Activated B cell treated with CpG ODN at 0.5 μM for 24 hours (primary cell): ENCODE measurements at regions of chr10 and their contacts with region 1.

Region 1: DNA sequence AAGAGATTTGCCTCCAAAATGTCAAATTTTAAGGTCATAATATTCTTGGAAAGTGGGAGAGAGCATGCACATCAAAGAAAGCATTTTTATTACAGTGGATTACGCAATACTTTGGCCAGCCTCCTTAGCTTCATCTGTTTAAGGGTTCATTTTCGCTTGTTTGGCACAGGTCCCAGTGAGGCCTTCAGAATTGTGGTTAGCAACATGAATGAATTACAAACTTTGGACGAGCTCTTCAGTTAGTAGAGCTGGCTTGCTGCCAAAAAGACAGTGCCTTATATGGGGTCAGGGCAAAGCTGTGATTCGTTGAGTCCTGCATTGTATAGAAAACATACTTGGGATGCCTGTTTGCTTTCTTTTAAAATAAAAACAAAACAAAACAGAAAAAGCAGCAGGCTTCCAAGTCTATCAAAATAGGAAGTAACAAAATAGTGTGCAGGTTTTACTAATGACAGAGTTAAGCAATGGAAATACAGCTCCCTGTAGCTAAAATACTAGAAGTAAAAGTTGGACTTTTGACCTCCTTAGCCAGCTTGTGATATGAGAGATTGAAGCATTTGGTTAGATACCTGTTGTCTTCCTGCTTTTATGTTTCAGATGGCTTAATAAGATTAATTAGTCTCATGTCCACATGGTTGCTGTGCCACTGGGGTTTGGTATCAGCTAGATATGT is 190.8 kb downstream of the MLLT10 start:
- DNase-seq: no peak
- ATAC-seq: no peak
- H3K4me3 Mint-ChIP-seq: no peak overlapping the region
- H3K27ac Mint-ChIP-seq: no peak overlapping the region
- H3K4me1 Mint-ChIP-seq: peaks cover 4% of the 10 kb centered on the region
- H3K27me3 Mint-ChIP-seq: no peaks in the 10 kb centered on the region
- CTCF ChIP-seq: no peak

Region 2: GRCh38 chr10:21587391-21587790 is 137.4 kb before region 1 on chr10:
- CTCF ChIA-PET with region 1: no interaction called
- POLR2A ChIA-PET with region 1: interaction called, 11 read pairs
- intact Hi-C with region 1: no loop called
- DNase-seq: no peak
- ATAC-seq: no peak
- H3K4me3 Mint-ChIP-seq: no peak overlapping the region
- H3K27ac Mint-ChIP-seq: no peak overlapping the region
- H3K4me1 Mint-ChIP-seq: no peaks in the 10 kb centered on the region
- H3K27me3 Mint-ChIP-seq: no peaks in the 10 kb centered on the region
- CTCF ChIP-seq: no peak

Region 3: DNA sequence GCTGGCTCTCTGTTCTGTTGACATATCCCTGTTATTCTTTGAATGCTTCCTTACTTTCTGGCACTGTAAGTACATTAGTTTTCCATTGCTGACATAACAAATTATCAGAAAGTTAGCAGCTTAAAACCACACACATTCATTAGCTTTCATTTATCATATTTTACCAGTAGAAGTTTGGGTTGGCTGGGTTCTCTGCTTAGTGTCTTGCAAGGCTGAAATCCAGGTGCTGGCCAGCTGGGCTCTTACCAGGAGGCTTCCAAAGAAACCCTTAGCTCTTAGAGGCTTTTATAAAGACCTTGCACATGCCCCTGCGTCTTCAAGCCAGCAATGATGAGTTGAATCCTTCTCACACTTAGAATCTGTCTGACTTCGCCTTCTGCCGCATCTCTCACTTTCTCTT is 30.2 kb before region 1 on chr10:
- CTCF ChIA-PET with region 1: no interaction called
- POLR2A ChIA-PET with region 1: no interaction called
- intact Hi-C with region 1: loop called (anchors 5 kb)
- DNase-seq: no peak
- ATAC-seq: no peak
- H3K4me3 Mint-ChIP-seq: no peak overlapping the region
- H3K27ac Mint-ChIP-seq: no peak overlapping the region
- H3K4me1 Mint-ChIP-seq: no peaks in the 10 kb centered on the region
- H3K27me3 Mint-ChIP-seq: no peaks in the 10 kb centered on the region
- CTCF ChIP-seq: no peak

Region 4: DNA sequence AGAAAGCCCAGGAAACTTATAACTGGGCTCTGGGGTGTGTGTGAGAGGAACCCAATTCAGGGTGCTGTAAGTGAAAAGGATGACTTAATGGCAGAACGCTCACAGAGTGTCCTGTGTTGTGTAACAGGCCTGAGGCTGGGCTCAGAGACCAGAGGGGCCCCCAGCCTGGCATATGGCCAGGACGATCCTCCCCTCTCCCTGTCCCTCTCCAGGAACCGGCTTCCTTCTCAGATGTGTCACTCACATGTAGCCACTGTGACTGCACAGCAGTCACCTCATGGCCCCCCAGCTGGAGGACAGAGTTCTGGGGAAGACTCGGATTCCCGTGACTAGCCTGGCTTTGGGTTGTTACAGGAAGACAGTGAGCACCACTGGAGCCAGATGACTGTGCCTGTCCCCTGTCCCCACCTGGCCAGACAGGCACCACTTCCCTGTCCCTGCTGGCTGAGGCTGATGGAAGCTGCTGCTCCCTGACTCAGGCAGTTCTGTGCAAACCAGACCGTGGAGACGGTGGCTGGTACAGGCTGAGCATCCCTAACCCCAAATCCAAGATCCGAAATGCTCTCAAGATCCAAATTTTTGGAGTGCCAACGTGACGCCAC is 29.7 kb after region 1 on chr10:
- CTCF ChIA-PET with region 1: no interaction called
- POLR2A ChIA-PET with region 1: no interaction called
- intact Hi-C with region 1: no loop called
- DNase-seq: no peak
- ATAC-seq: no peak
- H3K4me3 Mint-ChIP-seq: no peak overlapping the region
- H3K27ac Mint-ChIP-seq: no peak overlapping the region
- H3K4me1 Mint-ChIP-seq: no peaks in the 10 kb centered on the region
- H3K27me3 Mint-ChIP-seq: no peaks in the 10 kb centered on the region
- CTCF ChIP-seq: no peak

Region 5: DNA sequence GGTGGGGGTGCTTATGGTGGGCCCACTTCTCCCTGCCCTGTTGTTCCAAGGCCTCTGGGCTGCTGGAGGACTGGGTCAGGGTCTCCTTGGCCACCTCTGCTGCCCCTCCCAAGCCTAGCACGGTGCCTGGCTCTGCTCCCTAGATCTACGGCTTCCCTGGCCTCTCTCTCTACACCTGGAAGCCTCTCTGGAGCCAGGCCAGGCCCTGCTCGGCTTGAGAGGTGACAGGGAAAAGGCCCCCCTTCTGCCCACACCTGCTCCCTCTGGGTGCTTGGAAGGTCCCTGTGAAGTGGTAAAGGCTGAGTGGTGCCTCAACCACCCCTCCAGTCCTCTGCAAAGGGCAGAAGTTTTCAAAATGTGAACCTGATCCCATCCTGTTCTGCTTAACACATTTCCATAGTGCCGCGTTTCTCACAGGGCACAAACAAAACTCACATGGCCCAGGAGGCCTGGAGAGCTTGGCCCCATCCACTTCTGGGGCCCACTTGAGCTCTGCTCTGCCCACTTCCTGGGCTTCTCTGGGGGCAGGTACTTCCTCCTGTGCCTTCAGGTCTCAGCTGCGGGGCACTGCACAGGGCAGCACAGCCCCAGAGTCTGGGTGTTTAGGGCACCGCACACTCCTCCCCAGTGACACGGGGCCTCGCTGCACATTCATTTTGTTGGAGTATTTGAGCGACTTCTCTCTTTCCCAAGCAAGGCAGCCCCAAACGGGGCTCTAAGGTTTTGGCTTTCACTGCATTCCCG is 819.7 kb after region 1 on chr10:
- CTCF ChIA-PET with region 1: no interaction called
- POLR2A ChIA-PET with region 1: no interaction called
- intact Hi-C with region 1: no loop called
- DNase-seq: no peak
- ATAC-seq: no peak
- H3K4me3 Mint-ChIP-seq: no peak overlapping the region
- H3K27ac Mint-ChIP-seq: no peak overlapping the region
- H3K4me1 Mint-ChIP-seq: no peaks in the 10 kb centered on the region
- H3K27me3 Mint-ChIP-seq: no peaks in the 10 kb centered on the region
- CTCF ChIP-seq: no peak